B cell (primary cell): ENCODE measurements at regions of chr2 and their contacts with region 1.

Region 1: GRCh38 chr2:27703638-27704341 is 40.1 kb downstream of the SLC4A1AP start:
- DNase-seq: peak; percentile 83
- ATAC-seq: peak; percentile 78
- H3K4me3 ChIP-seq: no peak overlapping the region
- H3K4me3 Mint-ChIP-seq: no peak overlapping the region
- H3K27ac ChIP-seq: no peak overlapping the region
- H3K27ac Mint-ChIP-seq: no peak overlapping the region
- H3K4me1 ChIP-seq: no peaks in the 10 kb centered on the region
- H3K4me1 Mint-ChIP-seq: peaks cover 4% of the 10 kb centered on the region
- H3K27me3 ChIP-seq: no peaks in the 10 kb centered on the region
- H3K27me3 Mint-ChIP-seq: peaks cover 12% of the 10 kb centered on the region
- CTCF ChIP-seq: peak; percentile 91

Region 2: GRCh38 chr2:27689424-27689823 is 14.4 kb before region 1 on chr2:
- CTCF ChIA-PET with region 1: interaction called, 34 read pairs
- POLR2A ChIA-PET with region 1: no interaction called
- intact Hi-C with region 1: no loop called
- DNase-seq: no peak
- ATAC-seq: no peak
- H3K4me3 ChIP-seq: no peak overlapping the region
- H3K4me3 Mint-ChIP-seq: no peak overlapping the region
- H3K27ac ChIP-seq: no peak overlapping the region
- H3K27ac Mint-ChIP-seq: no peak overlapping the region
- H3K4me1 ChIP-seq: no peaks in the 10 kb centered on the region
- H3K4me1 Mint-ChIP-seq: no peaks in the 10 kb centered on the region
- H3K27me3 ChIP-seq: no peaks in the 10 kb centered on the region
- H3K27me3 Mint-ChIP-seq: no peaks in the 10 kb centered on the region
- CTCF ChIP-seq: no peak

Region 3: DNA sequence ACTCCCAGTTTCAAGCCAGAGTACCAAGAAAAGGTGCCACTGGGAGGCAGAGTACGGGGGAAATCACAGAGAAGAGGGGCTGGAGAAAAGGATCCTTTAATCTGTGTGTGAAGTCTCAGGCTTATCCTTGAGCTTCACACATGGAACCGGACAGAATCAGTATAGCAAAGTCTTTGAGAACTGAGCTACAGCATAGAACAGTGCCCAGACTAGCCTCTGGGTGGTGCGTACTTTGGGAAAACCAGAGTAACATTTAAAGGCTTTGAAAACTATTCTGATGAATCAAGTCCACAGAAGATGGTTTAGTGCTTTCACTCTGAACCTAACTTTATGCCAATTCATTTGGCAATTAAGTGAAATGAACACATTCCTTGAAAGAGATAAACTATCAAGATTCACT is 269.8 kb after region 1 on chr2:
- CTCF ChIA-PET with region 1: no interaction called
- POLR2A ChIA-PET with region 1: no interaction called
- intact Hi-C with region 1: no loop called
- DNase-seq: no peak
- ATAC-seq: no peak
- H3K4me3 ChIP-seq: no peak overlapping the region
- H3K4me3 Mint-ChIP-seq: no peak overlapping the region
- H3K27ac ChIP-seq: no peak overlapping the region
- H3K27ac Mint-ChIP-seq: no peak overlapping the region
- H3K4me1 ChIP-seq: no peaks in the 10 kb centered on the region
- H3K4me1 Mint-ChIP-seq: peaks cover 2% of the 10 kb centered on the region
- H3K27me3 ChIP-seq: no peaks in the 10 kb centered on the region
- H3K27me3 Mint-ChIP-seq: no peaks in the 10 kb centered on the region
- CTCF ChIP-seq: no peak

Region 4: DNA sequence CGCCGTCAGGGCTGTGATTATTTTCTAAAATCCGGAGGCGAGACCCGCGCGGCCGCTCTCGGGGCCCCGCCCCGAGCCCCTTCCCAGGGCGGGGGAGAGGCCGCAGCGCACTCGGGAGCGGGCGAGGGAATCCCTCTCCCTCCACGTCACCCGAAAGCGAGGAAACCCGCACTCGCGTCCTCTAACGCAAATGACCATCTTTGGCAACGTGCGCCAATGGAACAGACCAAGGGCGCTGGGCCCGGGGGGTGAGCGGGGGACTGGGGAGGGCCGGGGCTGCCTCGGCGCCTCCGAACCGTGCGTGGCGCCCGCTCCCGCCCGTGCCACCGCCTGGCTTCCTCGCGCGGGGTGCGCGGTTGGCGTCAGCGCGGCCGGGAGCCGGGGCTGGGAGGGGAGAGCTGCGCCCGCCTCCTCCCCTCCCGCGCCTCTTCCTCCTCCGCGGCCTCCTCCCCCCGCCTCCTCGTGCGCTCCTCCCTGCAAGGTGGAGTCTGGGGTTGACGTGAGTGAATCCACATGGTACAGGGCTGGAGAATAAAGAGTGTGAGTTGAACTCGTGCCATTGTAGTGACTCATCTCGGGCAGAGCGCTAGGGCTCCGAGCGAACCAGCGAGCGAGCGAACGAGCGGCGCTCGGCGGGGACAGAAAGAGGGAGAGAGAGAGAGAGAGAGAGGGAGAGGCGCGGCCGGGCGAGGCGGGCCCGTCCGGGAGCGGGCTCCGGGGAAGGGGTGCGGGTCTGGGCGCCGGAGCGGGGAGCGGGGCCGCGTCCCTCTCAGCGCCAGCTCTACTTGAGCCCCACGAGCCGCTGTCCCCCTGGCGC is 688.7 kb after region 1 on chr2 and contains the start of gene FOSL2:
- CTCF ChIA-PET with region 1: interaction called, 15 read pairs
- POLR2A ChIA-PET with region 1: interaction called, 3 read pairs
- intact Hi-C with region 1: loop called (anchors 1 kb)
- DNase-seq: peak; percentile 84
- ATAC-seq: peak; percentile 78
- H3K4me3 ChIP-seq: peak within 1 kb of the TSS; percentile 42 to 90 (median 61)
- H3K4me3 Mint-ChIP-seq: peak within 1 kb of the TSS; percentile 89
- H3K27ac ChIP-seq: peak within 1 kb of the TSS; percentile 6 to 52
- H3K27ac Mint-ChIP-seq: peak within 1 kb of the TSS; percentile 87
- H3K4me1 ChIP-seq: peaks cover 18% of the 10 kb centered on the region in 2 donors
- H3K4me1 Mint-ChIP-seq: peaks cover 25% of the 10 kb centered on the region
- H3K27me3 ChIP-seq: peaks cover 0 to 31% (median 4%) of the 10 kb centered on the region in 4 experiments
- H3K27me3 Mint-ChIP-seq: peaks cover 17% of the 10 kb centered on the region
- CTCF ChIP-seq: no peak
- total RNA-seq, gene FOSL2: 37.7 and 42.2 TPM in 2 replicates

Region 5: DNA sequence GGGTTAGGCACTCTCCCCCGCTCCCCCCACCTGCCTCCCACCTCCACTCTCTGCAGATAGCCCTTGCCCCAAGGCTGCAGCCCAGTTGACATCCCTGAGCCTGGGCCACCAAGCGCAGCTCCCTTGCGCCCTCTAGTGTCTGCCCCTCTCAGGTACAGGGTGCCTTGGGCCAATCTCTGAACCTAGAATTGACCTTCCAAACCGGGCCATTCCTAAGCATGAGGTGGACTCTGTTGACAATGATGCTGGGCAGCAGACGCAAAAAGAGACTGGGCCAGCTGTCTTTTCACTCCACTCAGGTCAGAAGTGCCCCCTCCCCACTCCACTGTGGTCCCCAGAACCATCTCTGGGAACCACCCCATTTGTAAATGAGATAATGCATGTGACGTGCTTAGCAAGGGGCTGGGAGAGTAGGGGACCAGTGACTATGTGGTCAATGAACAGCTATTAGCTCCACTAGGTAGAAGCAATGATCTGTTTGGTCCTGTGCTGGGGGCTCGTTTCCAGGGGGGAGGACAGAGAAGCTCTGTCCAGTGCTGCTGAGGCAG is 748.8 kb after region 1 on chr2:
- CTCF ChIA-PET with region 1: interaction called, 19 read pairs
- POLR2A ChIA-PET with region 1: no interaction called
- intact Hi-C with region 1: loop called (anchors 1 kb)
- DNase-seq: peak; percentile 49
- ATAC-seq: peak; percentile 72
- H3K4me3 ChIP-seq: no peak overlapping the region
- H3K4me3 Mint-ChIP-seq: no peak overlapping the region
- H3K27ac ChIP-seq: no peak overlapping the region
- H3K27ac Mint-ChIP-seq: no peak overlapping the region
- H3K4me1 ChIP-seq: no peaks in the 10 kb centered on the region
- H3K4me1 Mint-ChIP-seq: no peaks in the 10 kb centered on the region
- H3K27me3 ChIP-seq: peaks cover 0 to 2% (median 0%) of the 10 kb centered on the region in 4 experiments
- H3K27me3 Mint-ChIP-seq: peaks cover 3% of the 10 kb centered on the region
- CTCF ChIP-seq: peak; percentile 67